ENCODE measurements at regions of chr4 and their contacts with region 1.

Region 1: DNA sequence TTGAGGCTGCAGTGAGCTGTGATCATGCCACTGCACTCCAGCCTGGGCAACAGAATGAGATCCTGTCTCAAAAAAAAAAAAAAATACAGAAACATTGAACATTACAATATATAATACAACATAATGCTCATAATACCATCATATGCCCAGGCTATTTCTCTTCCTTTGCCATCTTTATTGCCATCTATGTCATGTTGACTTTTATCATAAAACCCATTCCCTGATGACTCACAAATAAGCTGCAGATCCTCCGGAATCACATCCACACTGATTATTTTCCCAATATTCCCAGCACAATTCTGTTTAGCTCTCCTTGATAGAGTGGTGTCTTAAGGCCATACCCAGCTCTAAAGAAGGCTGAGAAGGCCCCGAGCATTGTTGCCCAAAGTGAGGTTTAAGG is 9.2 kb upstream of the FBXW7 start:
- DNase-seq: no peak
- H3K4me3 ChIP-seq: no peak overlapping the region
- H3K27ac ChIP-seq: no peak overlapping the region
- H3K4me1 ChIP-seq: no peaks in the 10 kb centered on the region
- H3K27me3 ChIP-seq: no peaks in the 10 kb centered on the region
- CTCF ChIP-seq: no peak

Region 2: GRCh38 chr4:152585023-152585441 is 39.9 kb after region 1 on chr4:
- intact Hi-C with region 1: loop called (anchors 2 kb)
- DNase-seq: no peak
- H3K4me3 ChIP-seq: no peak overlapping the region
- H3K27ac ChIP-seq: no peak overlapping the region
- H3K4me1 ChIP-seq: peaks cover 2% of the 10 kb centered on the region
- H3K27me3 ChIP-seq: no peaks in the 10 kb centered on the region
- CTCF ChIP-seq: no peak